Activated CD8-positive, alpha-beta T cell treated with anti-CD3 and anti-CD28 coated beads for 36 hours (primary cell): ENCODE measurements at regions of chr12 and their contacts with region 1.

Region 1: DNA sequence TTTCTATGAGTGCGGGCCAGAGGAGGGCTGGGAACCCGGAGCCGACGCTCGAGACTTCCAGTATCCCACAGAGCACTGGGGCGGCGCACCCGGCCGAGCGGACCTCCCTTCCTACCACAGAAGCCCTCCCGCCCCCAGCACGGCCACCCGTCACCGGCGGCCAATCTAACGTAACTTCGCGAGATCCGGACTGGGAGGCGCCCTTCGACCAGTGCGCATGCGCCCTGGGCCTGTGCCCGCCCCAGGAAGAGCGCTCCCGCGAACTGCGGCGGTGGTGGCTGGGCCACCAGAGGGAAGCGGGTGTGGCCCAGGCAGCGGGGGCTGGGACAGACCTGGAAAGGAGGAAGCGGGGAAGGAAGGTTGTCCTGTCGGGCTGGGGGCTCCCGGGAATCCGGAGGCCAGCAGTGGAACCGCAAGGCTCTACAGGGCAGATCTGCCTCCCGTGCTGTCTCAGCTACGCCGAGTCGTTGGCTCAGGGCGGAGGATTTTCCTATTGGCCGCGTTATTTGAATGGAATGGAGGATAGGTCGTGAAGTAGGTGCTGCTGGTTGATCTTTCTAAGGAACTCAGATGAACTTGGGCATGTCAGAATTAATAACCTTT is at the start of gene PPP1R12A:
- DNase-seq: peak; percentile 95
- ATAC-seq: peak; percentile 86
- H3K4me3 Mint-ChIP-seq: peak within 1 kb of the TSS; percentile 100
- H3K27ac Mint-ChIP-seq: peak within 1 kb of the TSS; percentile 99
- H3K4me1 Mint-ChIP-seq: peaks cover 34% of the 10 kb centered on the region
- H3K27me3 Mint-ChIP-seq: no peaks in the 10 kb centered on the region
- CTCF ChIP-seq: no peak
- total RNA-seq, gene PPP1R12A: 56.6 to 57.8 TPM

Region 2: GRCh38 chr12:79886917-79887519 is 48.1 kb before region 1 on chr12:
- CTCF ChIA-PET with region 1: interaction called, 5 read pairs
- POLR2A ChIA-PET with region 1: no interaction called
- intact Hi-C with region 1: loop called (anchors 5 kb)
- DNase-seq: no peak
- ATAC-seq: peak; percentile 78
- H3K4me3 Mint-ChIP-seq: no peak overlapping the region
- H3K27ac Mint-ChIP-seq: no peak overlapping the region
- H3K4me1 Mint-ChIP-seq: peaks cover 63% of the 10 kb centered on the region
- H3K27me3 Mint-ChIP-seq: no peaks in the 10 kb centered on the region
- CTCF ChIP-seq: peak; percentile 74

Region 3: GRCh38 chr12:79911889-79912656 is 23.0 kb before region 1 on chr12:
- CTCF ChIA-PET with region 1: no interaction called
- POLR2A ChIA-PET with region 1: no interaction called
- intact Hi-C with region 1: no loop called
- DNase-seq: no peak
- ATAC-seq: no peak
- H3K4me3 Mint-ChIP-seq: no peak overlapping the region
- H3K27ac Mint-ChIP-seq: peak overlapping the region; percentile 6
- H3K4me1 Mint-ChIP-seq: peaks cover 51% of the 10 kb centered on the region
- H3K27me3 Mint-ChIP-seq: no peaks in the 10 kb centered on the region
- CTCF ChIP-seq: no peak

Region 4: GRCh38 chr12:79954037-79954610 is 19.0 kb after region 1 on chr12:
- CTCF ChIA-PET with region 1: no interaction called
- POLR2A ChIA-PET with region 1: no interaction called
- intact Hi-C with region 1: no loop called
- DNase-seq: no peak
- ATAC-seq: no peak
- H3K4me3 Mint-ChIP-seq: no peak overlapping the region
- H3K27ac Mint-ChIP-seq: no peak overlapping the region
- H3K4me1 Mint-ChIP-seq: no peaks in the 10 kb centered on the region
- H3K27me3 Mint-ChIP-seq: peaks cover 2% of the 10 kb centered on the region
- CTCF ChIP-seq: no peak